IMR-90 (cell line): ENCODE measurements at regions of chr1 and their contacts with region 1.

Region 1: GRCh38 chr1:51729156-51729823 is 112.4 kb downstream of the OSBPL9 start:
- DNase-seq: peak; percentile 83
- ATAC-seq: peak; percentile 95
- H3K4me3 ChIP-seq: peak overlapping the region; percentile 91
- H3K27ac ChIP-seq: peak overlapping the region; percentile 68
- H3K4me1 ChIP-seq: peaks cover 3% of the 10 kb centered on the region; the same call in 1 of the 2 replicates
- H3K27me3 ChIP-seq: no peaks in the 10 kb centered on the region
- CTCF ChIP-seq: no peak
- POLR2A ChIP-seq: 0 out of 2 replicates have a peak, but pooled peaks have one; percentile 29
- RAD21 ChIP-seq: no peak

Region 2: DNA sequence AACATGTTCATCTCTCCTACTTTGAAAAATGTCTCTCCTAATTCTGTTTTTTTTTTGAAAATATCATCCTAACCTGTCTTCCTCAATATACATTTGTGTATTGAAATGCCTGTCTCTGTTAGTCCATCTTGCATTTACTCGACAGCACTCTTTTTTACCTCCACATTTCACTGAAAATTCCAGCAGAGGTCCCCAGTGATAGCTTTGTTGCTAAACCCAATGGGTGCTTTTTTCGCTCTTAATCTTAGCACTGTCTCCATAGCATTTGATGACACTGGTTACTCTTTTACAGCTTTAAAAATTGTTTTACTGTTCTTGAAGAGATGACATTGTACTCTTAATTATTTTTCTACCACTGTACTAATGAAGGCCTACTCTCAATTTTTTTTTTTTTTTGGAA is 101.6 kb before region 1 on chr1:
- CTCF ChIA-PET with region 1: no interaction called
- POLR2A ChIA-PET with region 1: no interaction called
- dilution Hi-C with region 1: no loop called
- in situ Hi-C with region 1: no loop called
- intact Hi-C with region 1: no loop called
- DNase-seq: peak; percentile 67
- ATAC-seq: peak; percentile 55; the same call in 1 of the 2 replicates
- H3K4me3 ChIP-seq: no peak overlapping the region
- H3K27ac ChIP-seq: no peak overlapping the region
- H3K4me1 ChIP-seq: peaks cover 5% of the 10 kb centered on the region
- H3K27me3 ChIP-seq: no peaks in the 10 kb centered on the region
- CTCF ChIP-seq: peak; percentile 66
- POLR2A ChIP-seq: no peak
- RAD21 ChIP-seq: peak; percentile 86

Region 3: DNA sequence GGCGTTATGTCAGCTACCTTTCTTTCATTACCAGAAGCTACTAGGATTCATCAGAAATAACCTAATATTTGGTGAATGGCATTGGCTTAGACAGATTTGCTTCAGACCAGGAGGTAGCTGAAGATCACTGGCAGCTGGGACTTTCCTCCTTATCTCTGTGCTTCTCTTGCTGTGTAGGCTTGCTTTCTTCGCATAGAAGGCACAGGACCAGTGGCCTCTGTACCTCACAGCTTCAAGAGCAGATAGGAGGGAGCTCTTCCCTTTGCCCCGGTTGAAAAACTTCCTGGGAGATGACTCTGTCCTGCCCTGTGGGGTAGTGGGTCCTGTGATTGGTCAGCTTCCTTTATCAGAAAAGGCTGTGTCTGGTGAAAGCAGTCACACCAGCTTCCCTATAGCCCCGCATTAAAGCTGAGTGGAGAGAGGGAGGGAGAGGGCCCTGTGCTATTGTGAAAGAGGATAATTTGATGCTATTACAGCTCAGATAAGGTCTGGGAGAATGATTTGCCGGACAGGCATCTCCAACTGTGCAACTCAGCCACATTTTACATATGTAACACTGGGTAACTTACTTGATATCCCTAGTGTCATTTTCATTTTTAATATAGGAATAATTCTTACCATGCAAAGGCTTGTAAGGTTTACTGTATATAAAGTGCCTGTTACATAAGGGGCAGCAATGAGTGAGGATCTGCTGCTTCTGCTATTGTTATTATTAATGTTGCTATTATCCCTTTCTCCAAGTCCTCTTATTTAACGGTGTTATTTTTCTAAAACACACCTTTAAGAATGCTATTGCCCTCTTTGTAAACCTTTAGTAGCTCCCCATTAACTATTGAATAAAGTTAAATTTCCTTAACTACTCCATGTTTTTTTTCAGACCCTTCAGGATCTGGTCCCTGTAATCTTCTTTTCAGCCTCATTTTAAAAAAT is 80.8 kb before region 1 on chr1:
- CTCF ChIA-PET with region 1: interaction called, 5 read pairs
- POLR2A ChIA-PET with region 1: no interaction called
- dilution Hi-C with region 1: no loop called
- in situ Hi-C with region 1: no loop called
- intact Hi-C with region 1: loop called (anchors 5 kb)
- DNase-seq: peak; percentile 93
- ATAC-seq: peak; percentile 89
- H3K4me3 ChIP-seq: no peak overlapping the region
- H3K27ac ChIP-seq: peak overlapping the region; percentile 51
- H3K4me1 ChIP-seq: peaks cover 19% of the 10 kb centered on the region
- H3K27me3 ChIP-seq: no peaks in the 10 kb centered on the region
- CTCF ChIP-seq: no peak
- POLR2A ChIP-seq: no peak
- RAD21 ChIP-seq: 0 out of 2 replicates have a peak, but pooled peaks have one; percentile 20

Region 4: GRCh38 chr1:51740652-51741051 is 11.4 kb after region 1 on chr1:
- CTCF ChIA-PET with region 1: no interaction called
- POLR2A ChIA-PET with region 1: interaction called, 10 read pairs
- dilution Hi-C with region 1: no loop called
- in situ Hi-C with region 1: no loop called
- intact Hi-C with region 1: no loop called
- DNase-seq: no peak
- ATAC-seq: no peak
- H3K4me3 ChIP-seq: no peak overlapping the region
- H3K27ac ChIP-seq: no peak overlapping the region
- H3K4me1 ChIP-seq: no peaks in the 10 kb centered on the region; the same call in 1 of the 2 replicates
- H3K27me3 ChIP-seq: no peaks in the 10 kb centered on the region
- CTCF ChIP-seq: no peak
- POLR2A ChIP-seq: no peak
- RAD21 ChIP-seq: no peak

Region 5: GRCh38 chr1:51907079-51907702 is 177.9 kb after region 1 on chr1:
- CTCF ChIA-PET with region 1: no interaction called
- POLR2A ChIA-PET with region 1: no interaction called
- dilution Hi-C with region 1: no loop called
- in situ Hi-C with region 1: no loop called
- intact Hi-C with region 1: no loop called
- DNase-seq: peak; percentile 19
- ATAC-seq: no peak; the same call in 1 of the 2 replicates
- H3K4me3 ChIP-seq: no peak overlapping the region
- H3K27ac ChIP-seq: no peak overlapping the region
- H3K4me1 ChIP-seq: peaks cover 13% of the 10 kb centered on the region
- H3K27me3 ChIP-seq: no peaks in the 10 kb centered on the region
- CTCF ChIP-seq: no peak
- POLR2A ChIP-seq: no peak
- RAD21 ChIP-seq: no peak